B cell (primary cell): ENCODE measurements at regions of chr1 and their contacts with region 1.

Region 1: GRCh38 chr1:51768971-51769588 is 109.4 kb downstream of the NRDC start:
- DNase-seq: peak; percentile 63
- ATAC-seq: peak; percentile 54
- H3K4me3 ChIP-seq: no peak overlapping the region
- H3K4me3 Mint-ChIP-seq: no peak overlapping the region
- H3K27ac ChIP-seq: no peak overlapping the region
- H3K27ac Mint-ChIP-seq: no peak overlapping the region
- H3K4me1 ChIP-seq: no peaks in the 10 kb centered on the region
- H3K4me1 Mint-ChIP-seq: peaks cover 13% of the 10 kb centered on the region
- H3K27me3 ChIP-seq: no peaks in the 10 kb centered on the region
- H3K27me3 Mint-ChIP-seq: no peaks in the 10 kb centered on the region
- CTCF ChIP-seq: peak; percentile 94

Region 2: GRCh38 chr1:51569284-51570062 is 199.6 kb before region 1 on chr1:
- CTCF ChIA-PET with region 1: interaction called, 15 read pairs
- POLR2A ChIA-PET with region 1: no interaction called
- intact Hi-C with region 1: no loop called
- DNase-seq: peak; percentile 71
- ATAC-seq: peak; percentile 59
- H3K4me3 ChIP-seq: peak overlapping the region; percentile 3 to 49 (median 37)
- H3K4me3 Mint-ChIP-seq: peak overlapping the region; percentile 82
- H3K27ac ChIP-seq: peak overlapping the region; percentile 52 to 84
- H3K27ac Mint-ChIP-seq: peak overlapping the region; percentile 90
- H3K4me1 ChIP-seq: peaks cover 51 to 55% of the 10 kb centered on the region in 2 donors
- H3K4me1 Mint-ChIP-seq: peaks cover 55% of the 10 kb centered on the region
- H3K27me3 ChIP-seq: no peaks in the 10 kb centered on the region
- H3K27me3 Mint-ChIP-seq: no peaks in the 10 kb centered on the region
- CTCF ChIP-seq: no peak

Region 3: GRCh38 chr1:51627678-51628077 is 141.4 kb before region 1 on chr1:
- CTCF ChIA-PET with region 1: interaction called, 21 read pairs
- POLR2A ChIA-PET with region 1: no interaction called
- intact Hi-C with region 1: loop called (anchors 1 kb)
- DNase-seq: peak; percentile 18
- ATAC-seq: no peak
- H3K4me3 ChIP-seq: no peak overlapping the region
- H3K4me3 Mint-ChIP-seq: no peak overlapping the region
- H3K27ac ChIP-seq: no peak overlapping the region
- H3K27ac Mint-ChIP-seq: no peak overlapping the region
- H3K4me1 ChIP-seq: no peaks in the 10 kb centered on the region
- H3K4me1 Mint-ChIP-seq: peaks cover 9% of the 10 kb centered on the region
- H3K27me3 ChIP-seq: no peaks in the 10 kb centered on the region
- H3K27me3 Mint-ChIP-seq: no peaks in the 10 kb centered on the region
- CTCF ChIP-seq: peak; percentile 27